Caco-2 (cell line): ENCODE measurements at regions of chr19 and their contacts with region 1.

Region 1: DNA sequence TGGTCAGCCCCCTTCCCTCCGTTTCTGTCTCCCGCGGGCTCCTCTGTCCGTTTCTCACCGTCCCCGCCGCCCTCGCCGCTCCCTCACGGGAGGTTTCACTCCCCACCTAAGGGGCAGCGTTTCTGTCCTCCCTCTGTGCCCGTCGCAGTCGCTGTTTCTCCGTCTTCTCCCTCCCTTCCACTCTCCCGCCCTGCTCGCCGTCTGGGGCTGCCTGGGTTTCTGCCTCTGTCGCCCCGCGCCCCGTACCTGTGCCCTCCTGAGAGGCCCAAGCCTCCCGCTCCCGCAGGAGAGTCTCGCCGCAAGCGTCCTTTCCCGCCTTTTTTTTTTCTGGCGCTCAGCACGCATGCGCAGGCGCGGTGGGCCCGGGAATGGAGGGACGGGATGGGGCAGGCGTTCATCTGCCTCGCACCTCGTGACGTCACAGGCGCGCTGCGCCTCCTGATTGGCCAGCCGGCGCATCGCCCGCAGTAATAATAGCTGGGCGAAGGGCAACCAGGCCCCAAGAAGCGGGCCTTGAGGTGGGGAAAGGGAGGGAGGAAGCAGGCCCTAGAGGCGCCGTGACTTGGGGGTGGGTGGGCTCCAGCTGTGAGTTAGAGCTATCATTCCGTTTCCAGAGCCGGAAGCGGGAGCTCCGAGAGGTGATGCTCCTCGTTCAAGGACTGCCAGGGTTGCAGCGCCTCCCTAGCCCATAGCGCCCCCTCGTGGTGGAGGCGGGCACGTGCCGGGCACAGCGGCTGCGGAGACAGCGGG is 15.4 kb downstream of the SSC5D start:
- DNase-seq: peak; percentile 96 to 99
- H3K4me3 ChIP-seq: peak overlapping the region; percentile 53
- H3K4me3 Mint-ChIP-seq: peak overlapping the region; percentile 87
- H3K27ac Mint-ChIP-seq: peak overlapping the region; percentile 93
- H3K4me1 ChIP-seq: peaks cover 8% of the 10 kb centered on the region; the same call in 1 of the 2 replicates
- H3K4me1 Mint-ChIP-seq: peaks cover 18% of the 10 kb centered on the region
- H3K27me3 ChIP-seq: no peaks in the 10 kb centered on the region
- H3K27me3 Mint-ChIP-seq: peaks cover 8% of the 10 kb centered on the region
- CTCF ChIP-seq: peak; percentile 98 to 99

Region 2: DNA sequence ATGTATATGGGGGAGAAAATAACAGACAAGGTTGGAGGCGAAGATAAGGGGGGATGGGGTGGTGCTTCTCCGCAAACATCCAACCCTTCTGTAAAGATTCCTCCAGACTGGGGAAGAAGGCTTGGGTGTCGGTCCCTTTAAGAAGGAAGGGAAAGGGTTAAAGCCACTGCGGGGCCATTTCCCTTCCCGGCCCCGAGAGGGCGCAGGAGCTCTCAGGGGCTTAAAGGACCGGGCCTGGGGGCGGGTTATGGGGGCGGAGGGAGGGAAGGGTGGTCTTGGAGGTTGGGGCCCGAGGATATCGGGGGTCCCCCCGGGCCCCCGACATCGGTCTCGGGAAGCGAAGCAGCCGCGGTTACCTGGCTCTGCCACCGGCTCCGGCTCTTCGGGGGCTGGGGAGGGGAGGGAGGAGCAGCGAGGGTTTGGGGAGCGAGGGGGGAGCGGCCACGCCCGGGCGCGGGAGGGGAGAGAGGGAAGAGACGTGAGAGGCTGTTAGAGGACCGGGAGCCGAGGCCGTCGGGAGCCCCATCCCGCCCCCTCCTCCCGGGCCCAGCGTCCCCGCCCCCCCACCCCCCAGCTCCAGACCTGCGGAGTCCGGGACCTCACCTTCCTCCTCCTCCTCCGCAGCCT is 357.5 kb before region 1 on chr19:
- CTCF ChIA-PET with region 1: interaction called, 29 read pairs
- POLR2A ChIA-PET with region 1: interaction called, 8 read pairs
- intact Hi-C with region 1: no loop called
- DNase-seq: peak; percentile 69 to 73
- H3K4me3 ChIP-seq: peak overlapping the region; percentile 43
- H3K4me3 Mint-ChIP-seq: peak overlapping the region; percentile 66
- H3K27ac Mint-ChIP-seq: no peak overlapping the region
- H3K4me1 ChIP-seq: peaks cover 12% of the 10 kb centered on the region; the same call in 1 of the 2 replicates
- H3K4me1 Mint-ChIP-seq: peaks cover 20% of the 10 kb centered on the region
- H3K27me3 ChIP-seq: no peaks in the 10 kb centered on the region
- H3K27me3 Mint-ChIP-seq: peaks cover 8% of the 10 kb centered on the region
- CTCF ChIP-seq: peak; percentile 79 to 94

Region 3: DNA sequence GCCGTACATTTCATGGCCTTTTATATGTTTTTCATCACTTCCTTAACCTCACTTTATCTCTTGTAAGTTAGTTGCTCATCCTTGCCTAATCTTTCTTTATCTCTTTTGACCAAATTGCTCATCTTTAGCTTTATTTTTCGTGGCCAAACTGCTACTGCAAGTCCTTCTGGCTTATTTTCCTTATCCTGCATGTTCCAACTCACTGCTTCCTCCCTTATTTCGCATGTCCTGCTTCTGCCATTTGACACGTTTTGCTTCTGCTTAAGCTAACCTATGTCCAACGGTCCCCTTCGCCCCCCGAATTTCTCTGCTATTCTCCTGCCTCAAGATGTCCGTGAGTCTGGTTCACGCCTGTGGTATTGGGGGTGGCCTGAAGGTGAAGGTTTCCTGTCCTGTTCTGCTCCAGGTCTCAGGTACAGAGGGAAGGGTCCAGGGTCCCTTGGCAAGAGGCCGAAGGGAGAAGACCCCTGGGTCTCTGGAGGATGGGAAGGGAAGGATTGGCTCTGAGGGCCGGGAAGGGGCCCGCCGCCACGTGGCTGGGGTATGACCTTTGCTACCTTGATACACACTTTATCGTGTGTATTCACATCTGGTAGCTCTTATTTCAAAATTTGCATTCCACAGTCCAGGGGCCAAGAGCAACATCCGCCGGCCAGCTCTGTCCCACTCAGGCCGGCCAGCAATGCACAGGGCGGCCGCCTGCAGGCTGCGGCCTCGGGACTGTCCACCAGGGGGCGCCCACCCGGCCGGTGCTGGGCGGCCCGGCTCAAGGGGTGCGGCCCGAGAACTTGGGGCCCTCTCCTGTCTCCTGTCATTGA is 36.2 kb before region 1 on chr19:
- CTCF ChIA-PET with region 1: interaction called, 35 read pairs
- POLR2A ChIA-PET with region 1: interaction called, 4 read pairs
- intact Hi-C with region 1: loop called (anchors 2 kb)
- DNase-seq: peak in 1 of 2 experiments; percentile 83
- H3K4me3 ChIP-seq: no peak overlapping the region
- H3K4me3 Mint-ChIP-seq: no peak overlapping the region
- H3K27ac Mint-ChIP-seq: no peak overlapping the region
- H3K4me1 ChIP-seq: no peaks in the 10 kb centered on the region
- H3K4me1 Mint-ChIP-seq: peaks cover 11% of the 10 kb centered on the region
- H3K27me3 ChIP-seq: no peaks in the 10 kb centered on the region
- H3K27me3 Mint-ChIP-seq: peaks cover 7% of the 10 kb centered on the region
- CTCF ChIP-seq: peak; percentile 82 to 97

Region 4: DNA sequence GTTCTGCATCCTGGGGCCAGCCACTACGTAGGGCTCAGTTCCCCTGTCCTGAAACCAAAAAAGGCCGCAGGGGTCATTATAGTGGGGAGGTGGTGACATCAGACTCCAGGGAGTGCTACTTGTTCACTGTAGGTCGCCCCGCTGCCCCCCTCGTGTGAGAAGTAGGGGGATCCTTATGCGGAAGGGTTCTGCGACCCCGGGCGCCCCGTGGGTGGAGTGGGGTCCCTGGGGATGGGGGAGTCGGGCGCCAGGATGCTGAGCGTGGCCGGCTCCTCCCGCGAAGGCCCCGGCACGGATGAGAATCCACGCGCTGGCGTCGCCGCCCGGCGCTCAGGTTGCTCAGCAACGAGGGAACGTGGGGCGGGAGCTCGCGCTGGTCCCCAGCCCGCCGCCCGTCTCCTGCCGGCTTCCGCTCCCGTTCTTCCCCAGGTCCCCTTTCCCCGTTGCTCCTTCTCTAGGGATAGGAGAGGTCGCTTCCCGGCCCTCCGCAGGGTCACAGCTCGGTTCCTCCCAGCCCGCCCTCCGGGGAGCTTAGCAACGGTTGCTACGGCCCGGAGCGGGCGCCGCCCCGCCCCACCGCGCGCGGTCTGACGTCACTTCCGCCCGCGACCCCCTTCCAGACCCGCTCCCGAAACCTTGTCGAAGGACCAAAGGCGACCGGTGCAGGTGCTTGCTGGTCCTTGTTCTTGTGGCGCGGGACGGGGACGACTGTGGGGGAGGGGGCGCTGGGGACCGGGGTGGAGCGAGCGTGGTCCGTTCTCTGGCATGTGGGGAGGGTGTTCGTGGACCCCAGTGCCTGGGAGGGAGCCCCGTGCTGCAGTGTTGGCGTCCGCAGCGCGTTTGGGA is 18.9 kb before region 1 on chr19 and contains the start of gene NAT14:
- CTCF ChIA-PET with region 1: interaction called, 19 read pairs
- POLR2A ChIA-PET with region 1: interaction called, 7 read pairs
- intact Hi-C with region 1: no loop called
- DNase-seq: peak; percentile 78 to 88
- H3K4me3 ChIP-seq: peak within 1 kb of the TSS; percentile 90
- H3K4me3 Mint-ChIP-seq: peak within 1 kb of the TSS; percentile 76
- H3K27ac Mint-ChIP-seq: peak within 1 kb of the TSS; percentile 73
- H3K4me1 ChIP-seq: 0 out of 2 replicates have a peak, but pooled peaks cover 3% of the 10 kb centered on the region
- H3K4me1 Mint-ChIP-seq: peaks cover 7% of the 10 kb centered on the region
- H3K27me3 ChIP-seq: no peaks in the 10 kb centered on the region
- H3K27me3 Mint-ChIP-seq: no peaks in the 10 kb centered on the region
- CTCF ChIP-seq: no peak
- total RNA-seq, gene NAT14: 40.9 and 45.2 TPM in 2 replicates

Region 5: DNA sequence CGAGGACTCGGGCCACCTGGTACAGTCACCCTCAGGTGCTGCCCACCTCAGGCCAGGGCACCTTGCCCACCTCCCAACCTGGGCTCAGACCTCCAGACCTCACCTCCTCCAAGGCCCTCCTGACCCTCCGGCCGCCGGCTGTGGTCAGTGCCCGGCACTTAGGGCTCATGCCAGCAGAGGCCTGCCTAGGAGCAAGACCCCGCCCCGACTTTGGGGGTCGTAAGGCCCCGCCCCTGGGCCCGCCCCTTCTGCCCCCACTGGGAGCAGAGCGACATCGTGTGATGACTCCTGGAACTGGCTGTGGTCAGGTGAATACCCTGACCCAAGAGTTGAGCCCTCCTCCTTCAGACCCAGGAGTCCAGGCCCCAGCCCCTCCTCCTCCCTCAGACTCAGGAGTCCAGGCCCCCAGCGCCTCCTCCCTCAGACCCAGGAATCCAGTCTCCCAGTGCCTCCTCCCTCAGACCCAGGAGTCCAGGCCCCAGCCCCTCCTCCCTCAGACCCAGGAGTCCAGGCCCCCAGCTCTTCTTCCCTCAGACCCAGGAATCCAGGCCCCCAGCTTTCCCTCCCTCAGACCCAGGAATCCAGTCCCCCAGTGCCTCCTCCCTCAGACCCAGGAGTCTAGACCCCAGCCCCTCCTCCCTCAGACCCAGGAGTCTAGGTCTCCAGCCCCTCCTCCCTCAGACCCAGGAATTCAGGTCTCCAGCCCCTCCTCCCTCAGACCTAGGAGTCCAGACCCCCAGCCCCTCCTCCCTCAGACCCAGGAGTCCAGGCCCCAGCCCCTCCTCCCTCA is 33.5 kb after region 1 on chr19 and contains the start of gene SBK2:
- CTCF ChIA-PET with region 1: no interaction called
- POLR2A ChIA-PET with region 1: no interaction called
- intact Hi-C with region 1: no loop called
- DNase-seq: no peak
- H3K4me3 ChIP-seq: no peak within 1 kb of the TSS
- H3K4me3 Mint-ChIP-seq: peak within 1 kb of the TSS; percentile 27
- H3K27ac Mint-ChIP-seq: peak within 1 kb of the TSS; percentile 53
- H3K4me1 ChIP-seq: 0 out of 2 replicates have a peak, but pooled peaks cover 3% of the 10 kb centered on the region
- H3K4me1 Mint-ChIP-seq: no peaks in the 10 kb centered on the region
- H3K27me3 ChIP-seq: no peaks in the 10 kb centered on the region
- H3K27me3 Mint-ChIP-seq: no peaks in the 10 kb centered on the region
- CTCF ChIP-seq: no peak
- total RNA-seq, gene SBK2: not detected in 2 replicates

Region 6: DNA sequence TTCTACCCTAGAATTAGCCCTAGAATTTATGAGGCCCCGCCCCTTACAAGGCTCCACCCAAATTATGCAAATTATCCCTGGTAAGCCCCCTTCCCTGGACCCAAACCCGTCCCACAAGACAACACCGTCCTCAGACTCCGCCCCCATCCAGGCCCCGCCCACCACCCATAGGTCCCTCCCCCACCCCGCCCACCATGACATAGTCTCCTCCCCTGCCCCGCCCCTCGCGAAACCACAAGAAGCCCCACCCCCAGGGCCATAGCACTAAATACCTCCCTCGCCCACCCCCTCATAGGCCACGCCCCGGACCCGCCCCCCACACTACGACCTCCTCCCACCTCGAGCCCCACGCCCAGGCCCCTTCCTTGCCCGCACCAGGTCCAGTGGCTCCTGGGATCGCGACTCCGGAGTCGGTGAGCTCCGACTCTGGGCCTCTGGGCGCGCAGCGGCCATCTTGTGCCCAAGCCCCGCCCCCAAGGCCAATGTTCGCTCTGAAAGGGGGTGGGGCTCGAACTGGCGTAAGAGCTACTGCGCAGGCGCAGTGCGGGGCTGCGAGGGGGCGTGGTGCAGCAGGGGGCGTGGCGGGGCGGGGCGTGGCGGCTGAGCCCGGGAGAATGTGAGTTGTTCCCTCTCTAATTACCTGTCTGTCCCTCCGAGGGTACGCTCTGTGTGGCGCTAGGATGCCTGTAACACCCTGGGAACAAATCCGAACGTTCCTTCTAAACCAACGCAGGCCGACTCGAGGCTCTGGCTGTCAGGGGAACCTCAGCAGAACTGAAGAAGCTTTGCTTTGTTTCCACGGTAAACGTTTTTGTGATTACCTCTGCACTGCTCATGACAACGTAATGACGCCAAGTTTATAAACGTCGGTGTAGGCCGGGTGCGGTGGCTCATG is 120.7 kb after region 1 on chr19 and contains the start of gene ZNF784:
- CTCF ChIA-PET with region 1: interaction called, 16 read pairs
- POLR2A ChIA-PET with region 1: interaction called, 4 read pairs
- intact Hi-C with region 1: no loop called
- DNase-seq: peak; percentile 94 to 97
- H3K4me3 ChIP-seq: peak within 1 kb of the TSS; percentile 74
- H3K4me3 Mint-ChIP-seq: peak within 1 kb of the TSS; percentile 73
- H3K27ac Mint-ChIP-seq: peak within 1 kb of the TSS; percentile 85
- H3K4me1 ChIP-seq: no peaks in the 10 kb centered on the region
- H3K4me1 Mint-ChIP-seq: peaks cover 7% of the 10 kb centered on the region
- H3K27me3 ChIP-seq: no peaks in the 10 kb centered on the region
- H3K27me3 Mint-ChIP-seq: no peaks in the 10 kb centered on the region
- CTCF ChIP-seq: no peak
- total RNA-seq, gene ZNF784: 8.5 and 10.2 TPM in 2 replicates